ENCODE measurements at regions of chrX and their contacts with region 1.

Region 1: GRCh38 chrX:103686199-103687072 is at the start of gene MORF4L2:
- DNase-seq: peak; percentile 93
- H3K4me3 Mint-ChIP-seq: peak within 1 kb of the TSS; percentile 81
- H3K27ac Mint-ChIP-seq: peak within 1 kb of the TSS; percentile 90
- H3K4me1 Mint-ChIP-seq: peaks cover 11% of the 10 kb centered on the region
- H3K27me3 Mint-ChIP-seq: no peaks in the 10 kb centered on the region
- total RNA-seq, gene MORF4L2: 181 to 183 TPM

Region 2: DNA sequence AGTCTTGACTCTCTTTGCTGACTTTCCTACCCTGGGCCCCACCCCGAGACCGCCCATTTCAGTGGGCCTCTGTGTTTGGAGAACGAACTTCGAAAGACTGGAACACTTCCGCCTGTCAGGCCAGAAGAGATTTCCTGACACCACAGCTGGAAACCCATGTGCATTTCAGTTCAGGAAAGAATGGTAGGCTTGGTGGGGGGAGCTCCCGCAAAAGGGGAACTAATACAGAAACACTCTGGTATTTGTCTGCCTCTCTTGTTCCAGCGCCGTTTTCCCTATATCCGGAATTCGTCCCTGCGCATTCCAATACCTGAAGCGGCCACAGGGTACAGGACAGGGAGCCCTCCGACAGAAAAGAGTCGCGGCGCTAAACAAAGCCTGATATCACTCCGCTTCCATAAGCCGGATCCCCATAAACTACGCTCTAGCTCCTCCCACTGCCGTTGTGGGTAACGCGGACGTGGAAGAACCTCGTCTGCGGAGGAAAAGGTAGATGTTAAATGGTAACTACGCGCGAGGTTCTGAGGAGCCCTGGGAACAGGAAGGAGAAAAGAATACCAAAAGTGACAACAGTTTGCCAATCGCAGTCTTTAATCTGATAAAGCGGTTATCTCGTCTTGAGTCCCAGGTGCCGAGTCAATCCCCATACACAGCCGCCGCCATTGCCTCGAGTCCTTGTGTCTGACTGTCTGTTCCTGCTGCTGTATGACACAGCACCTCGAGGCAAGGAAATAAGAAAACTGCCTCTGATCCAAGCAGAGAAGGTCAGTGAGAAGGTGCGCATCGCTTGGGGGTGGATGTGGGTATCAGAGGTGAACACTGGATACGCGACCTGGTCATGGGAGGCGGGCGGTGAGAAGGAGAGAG is 1087.1 kb before region 1 on chrX and contains the start of gene ARMCX5:
- CTCF ChIA-PET with region 1: no interaction called
- intact Hi-C with region 1: loop called (anchors 5 kb)
- DNase-seq: peak; percentile 79
- H3K4me3 Mint-ChIP-seq: peak within 1 kb of the TSS; percentile 100
- H3K27ac Mint-ChIP-seq: peak within 1 kb of the TSS; percentile 96
- H3K4me1 Mint-ChIP-seq: peaks cover 33% of the 10 kb centered on the region
- H3K27me3 Mint-ChIP-seq: no peaks in the 10 kb centered on the region
- total RNA-seq, gene ARMCX5: 9.5 to 11.4 TPM

Region 3: DNA sequence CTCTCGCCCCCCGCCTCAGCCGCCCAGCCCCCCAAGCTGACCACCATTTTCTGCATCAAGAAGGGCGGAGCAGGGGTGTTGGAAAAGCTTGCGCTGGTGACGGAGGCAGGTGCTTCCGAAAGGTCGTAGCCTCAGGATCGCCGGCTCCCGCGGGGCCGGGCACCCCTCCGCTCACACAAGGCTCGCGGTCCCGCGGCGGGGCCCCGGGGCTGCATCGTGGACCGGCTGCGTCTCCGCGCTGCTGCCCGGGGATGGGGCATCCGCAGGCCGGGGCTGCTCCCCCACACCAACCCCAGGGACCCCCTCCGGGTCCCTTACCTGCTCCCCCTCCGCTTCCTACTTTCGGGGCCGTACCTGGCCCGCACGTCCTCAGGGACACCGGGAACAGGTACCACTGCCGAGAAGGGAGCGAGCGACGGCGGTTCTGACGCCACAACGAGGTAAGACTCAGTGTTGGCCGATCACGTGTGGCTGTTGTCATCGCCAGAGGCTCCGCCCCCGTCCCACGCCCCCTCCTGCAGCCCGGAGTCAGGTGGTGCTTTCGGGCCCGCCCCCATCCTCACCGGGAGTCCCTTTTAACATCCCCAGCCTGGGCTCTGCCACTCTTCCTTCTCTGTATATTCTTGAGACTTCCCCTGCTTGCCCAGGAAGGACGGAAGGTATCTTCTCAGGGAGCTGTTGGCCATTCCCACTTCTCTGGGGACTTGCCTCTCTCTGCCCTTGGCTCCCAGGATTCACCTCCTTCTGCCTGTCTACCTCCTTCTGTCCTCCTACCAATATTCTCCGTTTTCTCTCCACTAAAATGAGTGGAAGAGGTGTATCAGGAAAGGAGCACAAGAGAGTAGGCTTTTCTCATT is 375.7 kb before region 1 on chrX and contains the start of gene BEX2:
- CTCF ChIA-PET with region 1: no interaction called
- intact Hi-C with region 1: loop called (anchors 10 kb)
- DNase-seq: peak; percentile 91
- H3K4me3 Mint-ChIP-seq: peak within 1 kb of the TSS; percentile 70
- H3K27ac Mint-ChIP-seq: peak within 1 kb of the TSS; percentile 53
- H3K4me1 Mint-ChIP-seq: peaks cover 9% of the 10 kb centered on the region
- H3K27me3 Mint-ChIP-seq: no peaks in the 10 kb centered on the region
- total RNA-seq, gene BEX2: 16.0 to 18.9 TPM

Region 4: DNA sequence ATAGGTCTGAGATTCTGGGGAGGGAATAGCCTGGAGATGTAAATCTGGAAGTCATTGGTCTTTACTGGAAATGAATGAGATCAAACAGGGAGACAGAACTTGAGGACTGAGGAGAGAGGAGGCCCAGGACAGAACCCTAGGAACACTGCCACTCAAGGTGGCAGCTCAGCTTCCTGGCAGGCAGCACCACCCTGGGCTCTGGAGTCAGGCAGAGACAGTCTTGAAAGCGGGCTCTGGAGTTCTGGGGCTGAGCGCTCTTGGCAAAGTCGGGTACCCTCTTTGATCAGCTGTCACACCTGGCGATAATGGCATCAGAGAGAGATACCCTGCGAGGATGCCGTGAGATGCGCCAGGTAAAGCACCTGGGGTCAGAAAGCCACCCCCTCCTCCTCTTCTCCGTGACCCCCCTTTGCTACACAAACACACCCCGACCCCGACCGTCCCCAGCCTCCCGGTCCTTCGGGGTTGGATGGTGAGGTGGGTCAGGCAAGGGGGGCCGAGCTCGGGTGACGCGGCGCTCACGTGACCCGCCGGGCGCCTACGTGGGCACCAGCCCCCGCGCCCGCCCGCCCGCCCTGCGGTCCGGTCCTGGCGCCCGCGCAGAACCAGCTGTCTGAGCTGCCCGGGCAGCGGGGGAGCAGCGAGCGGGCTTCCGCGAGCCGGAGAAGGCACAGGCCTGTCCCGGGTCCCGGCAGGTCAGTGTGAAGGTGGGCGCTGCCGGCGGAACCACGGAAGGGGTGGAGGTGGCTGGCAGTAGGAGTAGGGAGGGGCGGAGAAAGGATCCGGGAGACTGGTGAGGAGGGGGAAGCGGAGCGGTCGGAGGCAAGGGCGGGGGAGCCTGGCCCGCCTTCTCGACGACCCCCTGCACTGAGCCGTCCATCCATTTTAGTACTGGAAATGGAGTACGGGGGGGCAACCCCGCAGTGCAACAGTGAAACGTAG is 78.8 kb before region 1 on chrX and contains the start of gene TCEAL3:
- CTCF ChIA-PET with region 1: interaction called, 3 read pairs
- intact Hi-C with region 1: loop called (anchors 1 kb)
- DNase-seq: peak; percentile 20
- H3K4me3 Mint-ChIP-seq: peak within 1 kb of the TSS; percentile 76
- H3K27ac Mint-ChIP-seq: peak within 1 kb of the TSS; percentile 46
- H3K4me1 Mint-ChIP-seq: peaks cover 1% of the 10 kb centered on the region
- H3K27me3 Mint-ChIP-seq: no peaks in the 10 kb centered on the region
- total RNA-seq, gene TCEAL3: 4.4 to 6.2 TPM

Region 5: GRCh38 chrX:103774070-103774642 is 87.7 kb after region 1 on chrX:
- CTCF ChIA-PET with region 1: no interaction called
- intact Hi-C with region 1: loop called (anchors 1 kb)
- DNase-seq: no peak
- H3K4me3 Mint-ChIP-seq: no peak overlapping the region
- H3K27ac Mint-ChIP-seq: no peak overlapping the region
- H3K4me1 Mint-ChIP-seq: no peaks in the 10 kb centered on the region
- H3K27me3 Mint-ChIP-seq: no peaks in the 10 kb centered on the region

Region 6: GRCh38 chrX:104113222-104113965 is 427.0 kb after region 1 on chrX:
- CTCF ChIA-PET with region 1: no interaction called
- intact Hi-C with region 1: loop called (anchors 2 kb)
- DNase-seq: peak; percentile 62
- H3K4me3 Mint-ChIP-seq: peak overlapping the region; percentile 74
- H3K27ac Mint-ChIP-seq: no peak overlapping the region
- H3K4me1 Mint-ChIP-seq: peaks cover 33% of the 10 kb centered on the region
- H3K27me3 Mint-ChIP-seq: no peaks in the 10 kb centered on the region

Region 7: DNA sequence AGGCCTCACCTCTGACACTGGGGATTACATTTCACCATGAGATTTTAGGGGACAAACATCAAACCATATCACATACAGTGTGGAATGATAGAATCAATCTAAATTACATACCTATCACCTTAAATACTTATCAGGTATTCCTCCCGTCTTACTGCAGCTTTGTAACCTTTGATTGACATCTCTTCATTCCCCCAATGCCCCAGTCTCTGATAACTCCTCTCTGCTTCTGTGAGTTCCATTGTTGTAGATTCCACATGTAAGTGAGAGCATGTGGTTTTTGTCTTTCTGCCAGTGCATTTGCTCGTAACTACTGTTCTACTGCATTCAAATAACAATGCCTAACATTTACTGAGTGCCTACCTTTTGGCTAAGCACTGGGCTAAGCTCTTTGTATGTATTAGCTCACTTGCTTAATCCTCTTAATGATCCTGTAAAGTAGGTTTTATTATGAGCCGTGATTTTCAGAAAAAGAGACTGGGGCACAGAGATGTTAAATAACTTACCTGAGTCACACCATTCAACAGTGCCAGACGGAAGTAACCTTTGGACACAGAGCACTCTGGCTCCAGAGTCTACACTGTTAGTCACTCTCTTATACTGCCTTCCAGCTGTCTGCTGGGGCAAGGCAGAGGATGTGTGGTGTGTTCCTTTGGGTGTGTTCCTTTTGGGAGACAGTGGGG is 632.0 kb after region 1 on chrX:
- CTCF ChIA-PET with region 1: no interaction called
- intact Hi-C with region 1: no loop called
- DNase-seq: no peak
- H3K4me3 Mint-ChIP-seq: no peak overlapping the region
- H3K27ac Mint-ChIP-seq: no peak overlapping the region
- H3K4me1 Mint-ChIP-seq: no peaks in the 10 kb centered on the region
- H3K27me3 Mint-ChIP-seq: no peaks in the 10 kb centered on the region